Activated T-helper 1 cell treated with anti-CD3 and anti-CD28 coated beads, Interleukin-12 subunit alpha, Interleukin-12 subunit beta, Interleukin-2, Interleukin-4 antibody, amounts not matched to agents 30 ng/mL and 10 ng/mL and 1 ng/mL, durations not matched to agents 14 hours and 24 hours and 36 hours (primary cell): ENCODE measurements at regions of chr10 and their contacts with region 1.

Region 1: GRCh38 chr10:93702211-93703001 is at the start of gene FRA10AC1:
- DNase-seq: peak; percentile 86
- H3K4me3 Mint-ChIP-seq: no peak within 1 kb of the TSS
- H3K27ac Mint-ChIP-seq: no peak within 1 kb of the TSS
- H3K4me1 Mint-ChIP-seq: peaks cover 19% of the 10 kb centered on the region
- H3K27me3 Mint-ChIP-seq: no peaks in the 10 kb centered on the region
- total RNA-seq, gene FRA10AC1: 25.9 and 28.2 TPM in 2 replicates

Region 2: GRCh38 chr10:93496322-93497041 is 205.9 kb before region 1 on chr10 and contains the start of gene CEP55:
- intact Hi-C with region 1: loop called (anchors 2 kb)
- DNase-seq: peak; percentile 96
- H3K4me3 Mint-ChIP-seq: peak within 1 kb of the TSS; percentile 88
- H3K27ac Mint-ChIP-seq: peak within 1 kb of the TSS; percentile 95
- H3K4me1 Mint-ChIP-seq: peaks cover 46% of the 10 kb centered on the region
- H3K27me3 Mint-ChIP-seq: no peaks in the 10 kb centered on the region
- total RNA-seq, gene CEP55: 53.0 and 55.7 TPM in 2 replicates

Region 3: DNA sequence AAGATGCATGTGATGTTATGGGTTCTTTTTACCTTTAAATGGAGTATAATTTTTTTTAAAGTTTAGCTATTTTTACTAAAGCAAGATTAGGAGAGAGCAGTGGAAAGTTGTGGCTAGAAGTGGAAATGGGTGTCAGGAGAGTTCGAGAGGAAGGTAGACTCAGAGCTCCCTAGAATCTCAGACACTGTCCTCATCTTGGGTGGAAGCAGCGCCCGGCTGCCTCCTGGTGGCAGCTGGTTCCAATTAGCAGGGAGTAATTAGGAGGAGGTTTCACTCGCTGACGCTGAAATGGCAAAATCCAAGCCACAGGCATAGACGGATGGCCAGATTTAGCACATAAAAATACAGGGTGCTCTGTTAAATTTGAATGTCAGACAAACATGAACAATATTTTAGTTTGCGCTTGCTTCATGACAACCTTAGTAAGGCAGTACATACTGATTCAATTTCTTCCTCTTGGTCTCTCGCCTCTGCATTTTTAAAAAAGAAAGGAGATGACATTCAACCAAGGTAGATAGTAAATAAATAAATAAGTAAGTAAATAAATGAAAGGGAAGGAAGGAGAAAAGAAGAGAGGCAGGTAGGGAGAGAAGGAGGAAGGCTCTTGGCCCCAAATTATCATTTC is 113.8 kb after region 1 on chr10:
- intact Hi-C with region 1: loop called (anchors 2 kb)
- DNase-seq: no peak
- H3K4me3 Mint-ChIP-seq: no peak overlapping the region
- H3K27ac Mint-ChIP-seq: no peak overlapping the region
- H3K4me1 Mint-ChIP-seq: no peaks in the 10 kb centered on the region
- H3K27me3 Mint-ChIP-seq: peaks cover 13% of the 10 kb centered on the region

Region 4: DNA sequence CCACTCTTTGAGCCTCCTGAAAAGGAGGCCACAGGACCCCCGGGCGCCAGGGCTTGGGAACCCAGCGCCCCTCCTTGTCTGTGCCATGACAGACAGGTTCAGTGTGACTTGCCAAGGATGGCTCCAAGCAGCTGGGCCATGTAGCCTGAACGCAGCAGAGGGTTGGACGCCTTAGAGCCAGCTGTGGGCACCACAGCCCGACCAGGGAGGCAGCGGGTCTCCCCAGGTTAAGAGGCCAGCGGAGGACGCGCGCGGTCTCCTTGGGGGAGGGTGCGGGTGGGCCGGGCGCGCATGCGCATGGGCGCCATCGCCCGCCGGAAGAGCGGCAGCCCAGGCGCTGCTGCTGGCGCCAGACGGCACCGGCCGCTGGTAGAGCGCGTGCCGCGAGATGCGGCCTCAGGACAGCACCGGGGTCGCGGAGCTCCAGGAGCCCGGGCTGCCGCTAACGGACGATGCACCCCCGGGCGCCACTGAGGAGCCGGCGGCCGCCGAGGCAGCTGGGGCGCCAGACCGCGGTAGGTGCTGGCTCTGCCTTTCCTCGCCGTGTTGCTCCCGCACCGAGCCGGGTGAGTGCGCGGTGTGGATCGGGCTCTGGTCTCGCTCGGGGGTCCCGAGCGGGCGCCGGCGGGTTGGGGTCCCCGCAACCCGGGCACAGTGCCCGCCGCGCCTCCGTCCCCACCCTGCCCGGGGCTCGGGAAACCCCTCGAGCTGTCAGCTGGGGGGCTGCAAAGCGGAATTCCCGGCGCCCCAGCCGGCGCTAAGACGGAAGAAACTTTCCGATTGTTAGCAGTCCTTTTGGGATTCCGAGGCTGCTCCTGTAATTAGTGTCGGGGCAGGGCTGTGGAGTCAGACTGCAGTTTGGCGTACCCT is 191.5 kb after region 1 on chr10 and contains the start of gene SLC35G1:
- intact Hi-C with region 1: loop called (anchors 1 kb)
- DNase-seq: peak; percentile 57
- H3K4me3 Mint-ChIP-seq: peak within 1 kb of the TSS; percentile 85
- H3K27ac Mint-ChIP-seq: peak within 1 kb of the TSS; percentile 57
- H3K4me1 Mint-ChIP-seq: peaks cover 40% of the 10 kb centered on the region
- H3K27me3 Mint-ChIP-seq: peaks cover 6% of the 10 kb centered on the region
- total RNA-seq, gene SLC35G1: 5.6 and 5.8 TPM in 2 replicates

Region 5: GRCh38 chr10:94205396-94205831 is 503.0 kb after region 1 on chr10:
- intact Hi-C with region 1: no loop called
- DNase-seq: no peak
- H3K4me3 Mint-ChIP-seq: no peak overlapping the region
- H3K27ac Mint-ChIP-seq: no peak overlapping the region
- H3K4me1 Mint-ChIP-seq: no peaks in the 10 kb centered on the region
- H3K27me3 Mint-ChIP-seq: no peaks in the 10 kb centered on the region

Region 6: DNA sequence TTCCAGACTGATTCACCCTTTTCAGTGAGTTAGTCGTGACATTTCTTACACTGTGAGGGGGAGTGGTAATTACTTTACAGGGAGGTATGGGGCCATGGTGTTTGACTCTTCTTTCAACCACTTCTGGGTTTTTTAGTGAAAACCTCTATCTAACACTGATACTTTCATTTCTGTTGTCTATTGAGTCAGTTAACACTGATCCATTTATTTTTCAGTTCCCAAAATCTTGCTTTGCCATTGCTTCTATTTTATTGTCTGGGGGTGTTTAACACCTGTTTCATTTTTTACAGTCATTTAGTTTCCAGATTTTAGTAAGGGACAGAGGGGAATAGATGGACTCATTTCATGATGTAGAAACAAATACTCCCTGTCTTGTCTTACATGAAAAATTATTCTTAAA is 904.7 kb after region 1 on chr10:
- intact Hi-C with region 1: loop called (anchors 5 kb)
- DNase-seq: no peak
- H3K4me3 Mint-ChIP-seq: no peak overlapping the region
- H3K27ac Mint-ChIP-seq: peak overlapping the region; percentile 64
- H3K4me1 Mint-ChIP-seq: peaks cover 23% of the 10 kb centered on the region
- H3K27me3 Mint-ChIP-seq: no peaks in the 10 kb centered on the region